Naive thymus-derived CD4-positive, alpha-beta T cell (primary cell): ENCODE measurements at regions of chr9 and their contacts with region 1.

Region 1: DNA sequence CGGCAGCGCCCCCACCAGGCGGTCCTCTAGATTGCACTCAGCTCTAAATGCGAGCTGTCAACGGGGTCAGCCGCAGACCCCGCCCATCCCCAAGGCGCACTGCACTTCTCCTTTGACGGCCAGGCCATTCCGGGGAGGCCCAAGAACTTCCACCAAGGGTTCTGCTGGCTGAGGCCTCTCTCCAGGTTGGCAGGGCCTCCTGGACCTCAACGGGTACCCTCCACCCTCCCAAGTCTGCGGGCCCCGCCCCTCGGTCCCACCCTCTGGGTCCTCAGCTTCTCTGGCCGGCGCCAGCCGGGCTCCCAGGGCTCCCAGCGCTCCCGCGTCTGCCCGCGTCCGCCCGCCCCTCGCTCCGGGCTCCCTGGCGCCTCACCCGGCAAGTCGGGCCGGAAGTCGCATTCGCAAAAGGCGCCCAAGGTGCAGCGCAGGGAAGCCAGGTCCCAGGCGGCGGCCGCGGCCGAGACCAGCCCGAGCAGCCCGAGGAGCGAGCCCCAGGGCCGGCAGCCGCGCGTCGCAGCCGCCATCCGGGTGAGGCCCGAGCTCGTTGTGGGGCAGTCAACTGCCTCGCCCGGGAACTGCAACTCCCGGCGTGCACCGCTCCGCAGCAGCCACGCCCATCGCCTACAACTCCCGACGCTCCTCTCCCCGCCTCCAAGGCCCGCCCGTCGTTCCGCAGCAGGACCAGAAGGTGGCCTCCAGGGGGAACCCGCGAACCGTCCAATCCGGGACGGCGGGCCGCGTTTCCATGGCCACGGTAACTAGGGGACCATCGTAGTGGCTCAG is at the start of gene TOR2A:
- DNase-seq: peak; percentile 97 to 99 (median 98)
- ATAC-seq: peak; percentile 97
- H3K4me3 ChIP-seq: peak within 1 kb of the TSS; percentile 73
- H3K4me3 Mint-ChIP-seq: peak within 1 kb of the TSS; percentile 82 to 97 (median 88)
- H3K27ac ChIP-seq: peak within 1 kb of the TSS; percentile 88
- H3K27ac Mint-ChIP-seq: peak within 1 kb of the TSS; percentile 89 to 98 (median 93)
- H3K4me1 ChIP-seq: peaks cover 14 to 15% of the 10 kb centered on the region in 2 donors
- H3K4me1 Mint-ChIP-seq: peaks cover 0 to 21% (median 18%) of the 10 kb centered on the region in 7 donors
- H3K27me3 ChIP-seq: no peaks in the 10 kb centered on the region
- H3K27me3 Mint-ChIP-seq: no peaks in the 10 kb centered on the region
- total RNA-seq, gene TOR2A: 9.5 to 22.3 (median 10.8) TPM

Region 2: DNA sequence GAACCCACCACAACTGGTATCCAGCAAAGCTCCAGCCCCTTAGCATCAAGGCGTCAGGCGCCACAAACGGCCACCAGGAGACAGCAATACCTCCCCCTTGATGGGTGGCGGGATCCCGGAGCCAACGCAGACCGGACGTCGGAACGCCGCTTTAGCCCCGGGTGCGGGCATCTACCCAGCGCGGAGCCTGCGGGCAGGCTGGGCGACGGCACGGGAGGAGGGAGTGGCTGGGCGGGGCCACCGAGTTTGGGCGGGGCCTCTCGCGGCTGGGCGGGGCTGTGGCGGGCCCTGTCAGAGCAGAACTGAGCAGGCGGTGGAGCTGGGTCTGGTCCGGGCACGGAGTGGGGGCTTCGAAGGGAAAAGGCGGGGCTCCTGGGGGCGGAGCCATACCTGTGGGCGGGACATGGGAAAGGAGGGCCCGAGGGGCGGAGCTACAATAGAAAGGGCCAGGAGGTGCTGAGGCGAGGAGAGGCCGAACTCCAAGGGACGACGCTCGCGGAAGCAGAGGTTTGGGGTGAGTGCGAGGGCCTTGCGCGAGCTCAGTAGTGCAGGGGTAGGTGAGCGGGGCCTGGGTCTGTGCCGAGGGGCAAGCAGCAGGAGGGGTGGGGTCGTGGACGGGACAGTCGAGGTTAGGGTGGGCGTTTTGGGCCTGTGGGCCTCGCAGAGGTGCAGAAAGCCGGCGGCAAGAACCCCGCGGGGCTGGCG is 510.6 kb before region 1 on chr9:
- CTCF ChIA-PET with region 1: no interaction called
- POLR2A ChIA-PET with region 1: no interaction called
- intact Hi-C with region 1: loop called in 1 of 2 experiments (anchors 1 kb)
- DNase-seq: peak; percentile 81 to 90 (median 85)
- ATAC-seq: peak; percentile 82
- H3K4me3 ChIP-seq: peak overlapping the region; percentile 51
- H3K4me3 Mint-ChIP-seq: peak overlapping the region; percentile 74 to 93 (median 85)
- H3K27ac ChIP-seq: no peak overlapping the region
- H3K27ac Mint-ChIP-seq: peak overlapping the region; percentile 8 to 94 (median 82)
- H3K4me1 ChIP-seq: peaks cover 10 to 31% of the 10 kb centered on the region in 2 donors
- H3K4me1 Mint-ChIP-seq: peaks cover 24 to 49% (median 41%) of the 10 kb centered on the region in 7 donors
- H3K27me3 ChIP-seq: no peaks in the 10 kb centered on the region
- H3K27me3 Mint-ChIP-seq: peaks cover 0 to 58% (median 12%) of the 10 kb centered on the region in 5 donors

Region 3: GRCh38 chr9:127586537-127586936 is 148.4 kb before region 1 on chr9:
- CTCF ChIA-PET with region 1: interaction called, 31 read pairs
- POLR2A ChIA-PET with region 1: interaction called, 3 read pairs
- intact Hi-C with region 1: loop called in 1 of 2 experiments (anchors 1 kb)
- DNase-seq: peak; percentile 24 to 60 (median 53)
- ATAC-seq: peak; percentile 79
- H3K4me3 ChIP-seq: no peak overlapping the region
- H3K4me3 Mint-ChIP-seq: no peak overlapping the region
- H3K27ac ChIP-seq: no peak overlapping the region
- H3K27ac Mint-ChIP-seq: peak overlapping the region in 1 of 9 donors; percentile 56
- H3K4me1 ChIP-seq: no peaks in the 10 kb centered on the region
- H3K4me1 Mint-ChIP-seq: peaks cover 0 to 16% (median 0%) of the 10 kb centered on the region in 7 donors
- H3K27me3 ChIP-seq: no peaks in the 10 kb centered on the region
- H3K27me3 Mint-ChIP-seq: peaks cover 0 to 22% (median 5%) of the 10 kb centered on the region in 5 donors

Region 4: GRCh38 chr9:127770905-127771569 is 36.1 kb after region 1 on chr9:
- CTCF ChIA-PET with region 1: interaction called, 8 read pairs
- POLR2A ChIA-PET with region 1: interaction called, 3 read pairs
- intact Hi-C with region 1: loop called (anchors 1 kb)
- DNase-seq: peak; percentile 85 to 99 (median 92)
- ATAC-seq: peak; percentile 92
- H3K4me3 ChIP-seq: peak overlapping the region; percentile 71
- H3K4me3 Mint-ChIP-seq: peak overlapping the region; percentile 74 to 92 (median 86)
- H3K27ac ChIP-seq: peak overlapping the region; percentile 90
- H3K27ac Mint-ChIP-seq: peak overlapping the region; percentile 90 to 96 (median 94)
- H3K4me1 ChIP-seq: peaks cover 57 to 59% of the 10 kb centered on the region in 2 donors
- H3K4me1 Mint-ChIP-seq: peaks cover 44 to 82% (median 71%) of the 10 kb centered on the region in 7 donors
- H3K27me3 ChIP-seq: no peaks in the 10 kb centered on the region
- H3K27me3 Mint-ChIP-seq: no peaks in the 10 kb centered on the region

Region 5: DNA sequence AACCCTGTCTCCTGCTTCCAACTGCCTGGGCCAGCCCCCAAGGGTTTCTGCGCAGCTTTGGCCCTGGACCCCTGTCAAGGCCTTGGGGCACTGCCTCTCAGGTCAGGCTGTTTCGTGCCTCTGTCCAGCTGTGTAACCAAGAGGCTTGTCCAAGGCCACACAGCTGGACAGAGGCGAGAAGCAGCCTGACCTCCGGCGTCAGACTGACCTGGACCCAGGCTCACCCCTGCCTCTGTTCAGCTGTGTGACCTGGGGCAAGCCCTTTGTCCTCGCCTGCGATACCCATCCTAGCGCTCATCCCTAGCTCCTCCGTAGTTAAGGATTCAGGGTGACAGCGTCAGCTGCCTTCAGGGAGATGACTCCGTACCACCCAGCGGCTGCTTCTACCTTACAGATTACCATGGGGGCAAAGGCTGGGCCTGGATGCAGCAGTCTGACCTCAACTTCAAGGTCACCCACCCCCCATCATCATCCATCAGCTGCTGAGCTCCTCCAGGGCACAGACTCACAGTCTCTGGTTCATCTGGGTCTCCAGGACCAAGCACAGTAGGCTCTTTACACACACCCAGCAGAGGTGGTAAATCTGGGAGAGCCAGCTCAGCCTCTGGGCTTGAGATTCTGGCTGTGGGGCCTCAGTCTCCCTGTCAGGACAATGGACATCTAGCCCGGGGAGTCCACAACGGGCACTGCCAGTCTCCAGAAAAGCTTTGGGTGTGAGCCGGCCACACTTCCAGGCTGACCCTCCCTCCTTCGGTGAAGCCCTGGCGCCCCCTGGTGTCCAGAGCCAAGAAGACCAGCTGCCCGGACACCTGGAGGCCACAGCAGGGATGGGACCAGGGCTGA is 134.6 kb after region 1 on chr9:
- CTCF ChIA-PET with region 1: interaction called, 32 read pairs
- POLR2A ChIA-PET with region 1: interaction called, 7 read pairs
- intact Hi-C with region 1: loop called (anchors 1 kb)
- DNase-seq: peak; percentile 44 to 91 (median 62)
- ATAC-seq: peak; percentile 85
- H3K4me3 ChIP-seq: no peak overlapping the region
- H3K4me3 Mint-ChIP-seq: no peak overlapping the region
- H3K27ac ChIP-seq: no peak overlapping the region
- H3K27ac Mint-ChIP-seq: peak overlapping the region in 1 of 9 donors; percentile 32
- H3K4me1 ChIP-seq: peaks cover 12 to 13% of the 10 kb centered on the region in 2 donors
- H3K4me1 Mint-ChIP-seq: peaks cover 12 to 19% (median 16%) of the 10 kb centered on the region in 7 donors
- H3K27me3 ChIP-seq: no peaks in the 10 kb centered on the region
- H3K27me3 Mint-ChIP-seq: no peaks in the 10 kb centered on the region

Region 6: GRCh38 chr9:127884427-127884911 is 149.5 kb after region 1 on chr9:
- CTCF ChIA-PET with region 1: no interaction called
- POLR2A ChIA-PET with region 1: no interaction called
- intact Hi-C with region 1: no loop called
- DNase-seq: peak in 1 of 9 donors; percentile 1
- ATAC-seq: peak; percentile 38
- H3K4me3 ChIP-seq: no peak overlapping the region
- H3K4me3 Mint-ChIP-seq: peak overlapping the region in 1 of 10 donors; percentile 22
- H3K27ac ChIP-seq: no peak overlapping the region
- H3K27ac Mint-ChIP-seq: peak overlapping the region in 5 of 9 donors; percentile 40 to 81 (median 52)
- H3K4me1 ChIP-seq: no peaks in the 10 kb centered on the region
- H3K4me1 Mint-ChIP-seq: peaks cover 0 to 19% (median 14%) of the 10 kb centered on the region in 7 donors
- H3K27me3 ChIP-seq: no peaks in the 10 kb centered on the region
- H3K27me3 Mint-ChIP-seq: no peaks in the 10 kb centered on the region

Region 7: DNA sequence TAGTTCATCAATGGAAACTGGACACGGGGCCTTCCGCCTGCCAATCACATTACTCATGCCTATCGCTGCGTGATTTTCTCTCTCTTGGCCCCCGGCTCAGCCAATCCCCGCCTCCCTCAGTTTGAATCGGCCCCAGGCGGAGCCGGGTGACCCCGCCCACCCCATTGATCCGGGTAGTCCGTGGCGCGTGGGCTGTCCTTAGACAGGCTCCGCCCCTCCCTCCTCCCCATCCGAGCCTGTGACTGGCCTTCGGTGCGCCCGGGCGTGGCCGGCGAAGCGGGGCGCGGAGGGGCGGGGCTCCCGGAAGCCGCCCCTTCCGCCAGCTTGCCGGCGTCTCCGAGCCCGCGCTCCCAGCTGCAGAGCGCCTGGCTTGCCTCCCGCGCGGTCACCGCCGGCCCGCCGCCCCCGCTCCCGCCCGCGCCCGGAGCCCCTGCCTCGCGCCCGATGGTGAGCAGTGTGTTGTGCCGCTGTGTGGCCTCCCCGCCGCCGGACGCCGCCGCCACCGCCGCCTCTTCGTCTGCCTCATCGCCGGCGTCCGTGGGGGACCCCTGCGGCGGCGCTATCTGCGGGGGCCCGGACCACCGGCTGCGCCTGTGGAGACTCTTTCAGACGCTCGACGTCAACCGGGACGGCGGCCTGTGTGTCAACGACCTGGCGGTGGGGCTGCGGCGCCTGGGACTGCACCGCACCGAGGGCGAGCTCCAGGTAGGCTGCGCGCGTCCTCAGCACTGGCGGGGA is 333.1 kb after region 1 on chr9 and contains the start of gene SLC25A25:
- CTCF ChIA-PET with region 1: no interaction called
- POLR2A ChIA-PET with region 1: no interaction called
- intact Hi-C with region 1: loop called (anchors 1 to 10 kb)
- DNase-seq: peak; percentile 99 to 100 (median 100)
- ATAC-seq: peak; percentile 92
- H3K4me3 ChIP-seq: peak within 1 kb of the TSS; percentile 96
- H3K4me3 Mint-ChIP-seq: peak within 1 kb of the TSS in 8 of 10 donors; percentile 91 to 99 (median 94)
- H3K27ac ChIP-seq: peak within 1 kb of the TSS; percentile 88
- H3K27ac Mint-ChIP-seq: peak within 1 kb of the TSS; percentile 74 to 94 (median 85)
- H3K4me1 ChIP-seq: peaks cover 50 to 54% of the 10 kb centered on the region in 2 donors
- H3K4me1 Mint-ChIP-seq: peaks cover 38 to 69% (median 51%) of the 10 kb centered on the region in 7 donors
- H3K27me3 ChIP-seq: no peaks in the 10 kb centered on the region
- H3K27me3 Mint-ChIP-seq: no peaks in the 10 kb centered on the region
- total RNA-seq, gene SLC25A25: 12.4 to 26.3 (median 15.1) TPM